ENCODE measurements at regions of chr13 and their contacts with region 1.

Region 1: DNA sequence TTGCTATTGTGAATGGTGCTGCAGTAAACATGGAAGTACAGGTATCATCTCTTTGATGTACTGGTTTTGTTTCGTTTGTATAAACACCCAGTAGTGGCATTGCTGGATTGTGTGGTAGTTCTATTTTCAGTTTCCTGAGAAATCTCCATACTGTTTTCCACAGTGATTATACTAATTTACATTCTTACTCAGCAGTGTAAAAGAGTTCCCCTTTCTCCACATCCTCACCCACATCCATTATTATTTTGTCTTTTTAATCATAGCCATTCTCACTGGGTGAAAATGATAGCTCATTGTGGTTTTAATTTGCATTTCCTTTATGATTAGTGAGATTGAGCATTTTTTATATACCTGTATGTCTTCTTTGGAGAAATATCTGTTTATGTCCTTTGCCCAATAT is 62.3 kb upstream of the PARP4 start:
- DNase-seq: no peak
- ATAC-seq: no peak
- H3K4me3 ChIP-seq: no peak overlapping the region
- H3K4me3 Mint-ChIP-seq: no peak overlapping the region
- H3K27ac ChIP-seq: no peak overlapping the region
- H3K27ac Mint-ChIP-seq: no peak overlapping the region
- H3K4me1 ChIP-seq: no peaks in the 10 kb centered on the region
- H3K4me1 Mint-ChIP-seq: no peaks in the 10 kb centered on the region
- H3K27me3 ChIP-seq: no peaks in the 10 kb centered on the region
- H3K27me3 Mint-ChIP-seq: peaks cover 15% of the 10 kb centered on the region
- CTCF ChIP-seq: no peak

Region 2: GRCh38 chr13:24671386-24672107 is 96.7 kb after region 1 on chr13:
- CTCF ChIA-PET with region 1: interaction called, 6 read pairs
- POLR2A ChIA-PET with region 1: no interaction called
- intact Hi-C with region 1: loop called (anchors 2 kb)
- DNase-seq: peak; percentile 41
- ATAC-seq: no peak
- H3K4me3 ChIP-seq: no peak overlapping the region
- H3K4me3 Mint-ChIP-seq: peak overlapping the region; percentile 12
- H3K27ac ChIP-seq: no peak overlapping the region
- H3K27ac Mint-ChIP-seq: no peak overlapping the region
- H3K4me1 ChIP-seq: peaks cover 5 to 9% of the 10 kb centered on the region in 2 donors
- H3K4me1 Mint-ChIP-seq: peaks cover 8% of the 10 kb centered on the region
- H3K27me3 ChIP-seq: peaks cover 0 to 13% (median 3%) of the 10 kb centered on the region in 4 experiments
- H3K27me3 Mint-ChIP-seq: peaks cover 33% of the 10 kb centered on the region
- CTCF ChIP-seq: peak; percentile 42

Region 3: DNA sequence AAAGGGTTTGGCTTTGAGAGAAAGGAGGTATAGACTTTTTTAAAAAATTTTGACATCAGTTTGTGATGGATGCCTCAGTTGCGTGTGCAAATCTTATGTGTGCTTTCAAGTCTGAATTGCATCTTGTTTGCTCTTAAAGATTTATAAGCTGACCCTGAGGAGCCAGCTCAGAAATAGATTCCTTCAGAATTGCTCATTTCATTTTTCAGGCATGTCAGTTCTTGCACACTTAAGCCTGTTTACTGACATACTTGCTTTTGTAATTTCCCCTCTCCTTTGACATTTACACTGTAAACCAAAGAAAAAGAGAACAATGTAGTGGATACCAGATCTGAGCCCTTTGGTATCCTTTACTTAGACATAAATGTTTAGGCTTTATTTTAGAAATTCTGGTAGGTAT is 276.7 kb after region 1 on chr13:
- CTCF ChIA-PET with region 1: no interaction called
- POLR2A ChIA-PET with region 1: no interaction called
- intact Hi-C with region 1: no loop called
- DNase-seq: no peak
- ATAC-seq: no peak
- H3K4me3 ChIP-seq: no peak overlapping the region
- H3K4me3 Mint-ChIP-seq: no peak overlapping the region
- H3K27ac ChIP-seq: no peak overlapping the region
- H3K27ac Mint-ChIP-seq: no peak overlapping the region
- H3K4me1 ChIP-seq: no peaks in the 10 kb centered on the region
- H3K4me1 Mint-ChIP-seq: peaks cover 3% of the 10 kb centered on the region
- H3K27me3 ChIP-seq: peaks cover 0 to 4% (median 0%) of the 10 kb centered on the region in 4 experiments
- H3K27me3 Mint-ChIP-seq: peaks cover 18% of the 10 kb centered on the region
- CTCF ChIP-seq: no peak